Transverse colon (tissue), 4 donors: ENCODE measurements at regions of chr3 and their contacts with region 1.

Region 1: DNA sequence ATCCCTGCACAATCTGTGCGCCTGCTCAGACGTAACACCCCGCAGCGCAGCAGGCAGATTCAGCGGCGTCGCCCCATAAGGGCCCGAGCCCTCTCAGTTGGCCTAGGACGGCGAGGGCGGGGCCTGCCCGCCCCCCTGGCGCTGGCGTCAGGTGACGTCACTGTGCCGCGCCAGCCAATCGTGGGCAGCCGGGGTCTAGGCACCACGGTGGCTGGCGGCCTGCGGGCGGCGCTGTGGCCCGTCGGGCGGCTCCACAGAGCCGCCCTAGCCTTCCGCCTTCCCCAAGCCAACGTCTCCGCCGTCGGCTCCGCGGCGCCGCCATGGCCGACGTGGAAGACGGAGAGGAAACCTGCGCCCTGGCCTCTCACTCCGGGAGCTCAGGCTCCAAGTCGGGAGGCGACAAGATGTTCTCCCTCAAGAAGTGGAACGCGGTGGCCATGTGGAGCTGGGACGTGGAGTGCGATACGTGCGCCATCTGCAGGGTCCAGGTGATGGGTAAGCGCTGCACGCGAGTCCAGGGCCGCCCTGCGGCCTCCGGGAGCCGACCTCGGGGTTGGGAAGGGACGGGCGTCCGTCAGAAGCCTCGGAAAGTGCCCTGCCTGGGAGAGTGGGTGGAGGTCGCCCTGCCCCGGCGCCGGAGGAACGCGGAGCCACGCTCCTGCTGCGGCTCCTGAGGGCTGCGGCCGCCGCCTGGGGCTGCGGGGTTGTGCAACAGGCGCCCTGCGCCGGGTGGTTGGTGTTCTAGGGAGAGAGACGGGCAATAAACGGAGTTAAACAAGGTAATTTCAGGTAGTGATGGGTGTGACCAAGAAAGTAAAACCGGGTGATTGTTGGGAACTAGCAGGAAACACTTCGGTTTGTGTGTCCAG is at the start of gene RNF7:
- DNase-seq: peak; percentile 97
- H3K4me3 ChIP-seq: peak within 1 kb of the TSS; percentile 79 to 82 (median 81)
- H3K27ac ChIP-seq: peak within 1 kb of the TSS; percentile 95 to 99 (median 97)
- H3K4me1 ChIP-seq: peaks cover 18 to 41% (median 31%) of the 10 kb centered on the region in 4 donors
- H3K27me3 ChIP-seq: no peaks in the 10 kb centered on the region
- CTCF ChIP-seq: peak; percentile 81 to 98 (median 86)
- EP300 ChIP-seq: no peak
- POLR2A ChIP-seq: peak; percentile 93
- total RNA-seq, gene RNF7: 23.7 to 122 (median 58.5) TPM

Region 2: GRCh38 chr3:141311496-141312353 is 426.5 kb before region 1 on chr3:
- in situ Hi-C with region 1: loop called in 1 of 4 experiments (anchors 25 kb)
- intact Hi-C with region 1: no loop called
- DNase-seq: peak; percentile 100
- H3K4me3 ChIP-seq: peak overlapping the region; percentile 53 to 74 (median 58)
- H3K27ac ChIP-seq: peak overlapping the region; percentile 69 to 89 (median 80)
- H3K4me1 ChIP-seq: peaks cover 6 to 15% (median 10%) of the 10 kb centered on the region in 4 donors
- H3K27me3 ChIP-seq: no peaks in the 10 kb centered on the region
- CTCF ChIP-seq: peak; percentile 55 to 97 (median 77)
- EP300 ChIP-seq: no peak
- POLR2A ChIP-seq: peak; percentile 69

Region 3: GRCh38 chr3:141460097-141460704 is 278.1 kb before region 1 on chr3:
- in situ Hi-C with region 1: loop called in 2 of 4 experiments (anchors 25 kb)
- intact Hi-C with region 1: no loop called
- DNase-seq: peak; percentile 90
- H3K4me3 ChIP-seq: no peak overlapping the region
- H3K27ac ChIP-seq: no peak overlapping the region
- H3K4me1 ChIP-seq: peaks cover 0 to 7% (median 6%) of the 10 kb centered on the region in 4 donors
- H3K27me3 ChIP-seq: no peaks in the 10 kb centered on the region
- CTCF ChIP-seq: peak; percentile 76 to 86 (median 82)
- EP300 ChIP-seq: no peak
- POLR2A ChIP-seq: no peak

Region 4: DNA sequence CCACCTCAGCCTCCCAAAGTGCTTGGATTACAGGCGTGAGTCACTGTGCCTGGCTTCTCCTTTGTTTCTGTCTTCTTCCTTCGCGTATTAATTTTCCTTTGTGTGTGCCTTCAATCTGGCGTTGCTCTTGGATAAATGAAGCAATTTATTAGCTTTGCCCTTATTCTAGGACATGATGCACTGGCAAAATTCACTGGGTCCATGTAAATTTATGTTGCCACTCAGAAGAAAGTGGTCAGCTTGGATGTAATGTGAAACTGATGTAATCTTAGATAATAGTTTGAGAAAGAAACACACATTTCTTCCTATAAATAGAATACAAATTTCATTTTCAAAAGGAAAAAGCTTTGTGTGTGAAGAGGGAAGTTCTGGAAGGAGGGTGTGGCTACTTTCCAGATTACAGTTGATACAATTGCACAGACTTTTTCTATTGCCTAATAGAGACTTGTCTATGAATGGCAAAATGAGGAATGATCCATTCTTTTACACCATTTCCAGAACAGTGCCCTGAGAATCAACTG is 114.9 kb after region 1 on chr3:
- in situ Hi-C with region 1: loop called in 1 of 4 experiments (anchors 25 kb)
- intact Hi-C with region 1: no loop called
- DNase-seq: no peak
- H3K4me3 ChIP-seq: no peak overlapping the region
- H3K27ac ChIP-seq: peak overlapping the region in 1 of 4 donors; percentile 19
- H3K4me1 ChIP-seq: peaks cover 0 to 12% (median 6%) of the 10 kb centered on the region in 4 donors
- H3K27me3 ChIP-seq: no peaks in the 10 kb centered on the region
- CTCF ChIP-seq: no peak
- EP300 ChIP-seq: no peak
- POLR2A ChIP-seq: no peak

Region 5: GRCh38 chr3:141876891-141877621 is 138.8 kb after region 1 on chr3:
- in situ Hi-C with region 1: loop called in 1 of 4 experiments (anchors 25 kb)
- intact Hi-C with region 1: loop called (anchors 1 kb)
- DNase-seq: peak; percentile 65
- H3K4me3 ChIP-seq: peak overlapping the region; percentile 83 to 100 (median 91)
- H3K27ac ChIP-seq: peak overlapping the region; percentile 99 to 100 (median 100)
- H3K4me1 ChIP-seq: peaks cover 6 to 49% (median 29%) of the 10 kb centered on the region in 4 donors
- H3K27me3 ChIP-seq: no peaks in the 10 kb centered on the region
- CTCF ChIP-seq: no peak
- EP300 ChIP-seq: no peak
- POLR2A ChIP-seq: no peak

Region 6: GRCh38 chr3:141913150-141913811 is 175.0 kb after region 1 on chr3:
- in situ Hi-C with region 1: loop called in 3 of 4 experiments (anchors 25 kb)
- intact Hi-C with region 1: no loop called
- DNase-seq: peak; percentile 39
- H3K4me3 ChIP-seq: no peak overlapping the region
- H3K27ac ChIP-seq: no peak overlapping the region
- H3K4me1 ChIP-seq: no peaks in the 10 kb centered on the region
- H3K27me3 ChIP-seq: no peaks in the 10 kb centered on the region
- CTCF ChIP-seq: peak; percentile 60 to 77 (median 64)
- EP300 ChIP-seq: no peak
- POLR2A ChIP-seq: no peak

Region 7: GRCh38 chr3:142259359-142259758 is 521.1 kb after region 1 on chr3:
- in situ Hi-C with region 1: no loop called
- intact Hi-C with region 1: no loop called
- DNase-seq: no peak
- H3K4me3 ChIP-seq: no peak overlapping the region
- H3K27ac ChIP-seq: no peak overlapping the region
- H3K4me1 ChIP-seq: no peaks in the 10 kb centered on the region
- H3K27me3 ChIP-seq: no peaks in the 10 kb centered on the region
- CTCF ChIP-seq: no peak
- EP300 ChIP-seq: no peak
- POLR2A ChIP-seq: no peak